Activated B cell treated with CpG ODN at 0.5 μM for 24 hours (primary cell): ENCODE measurements at regions of chr22 and their contacts with region 1.

Region 1: GRCh38 chr22:21001560-21002325 is at the start of gene THAP7:
- DNase-seq: peak; percentile 97
- ATAC-seq: peak; percentile 88
- H3K4me3 Mint-ChIP-seq: peak within 1 kb of the TSS; percentile 93
- H3K27ac Mint-ChIP-seq: peak within 1 kb of the TSS; percentile 98
- H3K4me1 Mint-ChIP-seq: peaks cover 26% of the 10 kb centered on the region
- H3K27me3 Mint-ChIP-seq: no peaks in the 10 kb centered on the region
- CTCF ChIP-seq: no peak
- total RNA-seq, gene THAP7: 27.1 and 32.3 TPM in 2 replicates

Region 2: DNA sequence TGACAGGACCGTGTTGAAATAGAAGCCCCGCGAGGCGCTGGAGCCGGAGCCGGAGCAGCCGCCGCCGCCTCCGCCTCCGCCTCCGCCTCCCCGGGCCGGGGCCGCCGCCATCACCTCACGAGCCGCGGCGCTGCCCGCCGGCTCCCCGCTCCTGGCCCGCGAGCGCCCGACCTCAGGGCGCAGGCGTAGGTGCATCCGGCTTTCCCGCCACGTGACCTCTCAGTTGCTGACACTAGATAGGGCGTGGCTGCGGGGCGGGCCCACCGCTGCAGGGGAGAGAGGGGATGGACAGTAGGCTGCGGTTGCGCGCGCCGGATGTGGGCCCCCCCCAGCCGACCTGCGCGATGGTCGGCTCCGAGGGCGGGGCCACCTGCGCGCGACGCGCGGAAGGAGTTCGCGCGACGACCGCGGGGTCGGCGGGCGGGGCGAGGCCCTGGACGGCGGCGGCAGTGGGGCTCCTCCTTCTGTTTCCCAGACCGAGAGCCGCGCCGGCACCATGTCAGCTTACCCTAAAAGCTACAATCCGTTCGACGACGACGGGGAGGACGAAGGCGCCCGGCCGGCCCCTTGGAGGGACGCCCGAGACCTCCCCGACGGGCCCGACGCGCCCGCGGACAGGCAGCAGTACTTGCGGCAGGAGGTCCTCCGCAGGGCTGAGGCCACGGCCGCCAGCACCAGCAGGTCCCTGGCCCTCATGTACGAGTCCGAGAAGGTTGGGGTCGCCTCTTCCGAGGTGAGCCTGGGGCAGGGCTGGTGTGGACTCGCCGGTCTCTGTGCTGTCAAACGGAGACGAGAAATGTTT is 142.9 kb before region 1 on chr22 and contains the starts of genes PI4KA and SNAP29:
- CTCF ChIA-PET with region 1: no interaction called
- POLR2A ChIA-PET with region 1: no interaction called
- intact Hi-C with region 1: loop called (anchors 1 kb)
- DNase-seq: peak; percentile 97
- ATAC-seq: peak; percentile 93
- H3K4me3 Mint-ChIP-seq: peak within 1 kb of the TSS; percentile 89
- H3K27ac Mint-ChIP-seq: peak within 1 kb of the TSS; percentile 80
- H3K4me1 Mint-ChIP-seq: peaks cover 46% of the 10 kb centered on the region
- H3K27me3 Mint-ChIP-seq: no peaks in the 10 kb centered on the region
- CTCF ChIP-seq: no peak
- total RNA-seq, gene PI4KA: 101 and 114 TPM in 2 replicates
- total RNA-seq, gene SNAP29: 22.1 and 23.6 TPM in 2 replicates

Region 3: DNA sequence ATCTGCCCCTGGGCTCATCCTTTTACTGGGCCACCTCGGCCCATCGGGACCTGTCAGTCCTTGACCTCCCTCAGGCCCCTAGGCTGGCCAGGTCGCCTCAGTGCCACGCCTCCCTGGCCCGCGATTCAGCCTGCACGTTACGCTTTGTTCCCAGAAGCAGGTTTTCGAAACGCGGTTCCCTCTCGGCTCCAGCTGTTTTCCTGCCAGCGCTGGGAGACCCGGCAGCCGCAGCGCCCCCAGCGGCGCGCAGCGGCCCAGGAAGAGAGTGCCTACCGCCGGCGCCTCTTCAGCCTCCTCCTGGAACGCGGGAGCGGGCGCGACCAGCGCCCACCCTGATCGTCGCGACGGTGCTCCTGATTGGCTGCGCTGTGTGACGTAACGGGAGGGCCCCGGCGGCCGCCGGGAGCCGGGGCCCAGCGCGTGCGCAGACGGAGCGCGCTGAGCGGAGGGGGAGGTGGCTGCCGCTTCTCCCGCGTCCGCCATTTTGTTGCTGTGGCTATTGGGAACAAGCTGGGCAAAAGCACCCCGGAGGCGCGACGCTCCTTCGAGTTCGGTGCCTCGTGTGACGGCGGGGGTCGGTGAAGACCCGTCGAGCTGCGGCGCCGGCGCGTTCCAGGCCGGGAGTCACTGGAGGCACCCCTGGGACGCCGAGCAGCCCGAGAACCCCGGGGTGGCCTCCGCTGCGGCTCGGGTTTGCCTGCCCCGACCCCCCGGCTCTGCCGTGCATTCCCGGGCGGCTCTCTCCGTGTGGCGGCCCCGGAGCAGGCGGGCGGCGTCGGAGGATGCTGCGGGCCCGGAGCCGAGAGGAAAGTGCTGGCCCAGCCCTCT is 84.5 kb before region 1 on chr22 and contains the start of gene CRKL:
- CTCF ChIA-PET with region 1: no interaction called
- POLR2A ChIA-PET with region 1: interaction called, 6 read pairs
- intact Hi-C with region 1: loop called (anchors 1 kb)
- DNase-seq: peak; percentile 89
- ATAC-seq: peak; percentile 97
- H3K4me3 Mint-ChIP-seq: peak within 1 kb of the TSS; percentile 97
- H3K27ac Mint-ChIP-seq: peak within 1 kb of the TSS; percentile 94
- H3K4me1 Mint-ChIP-seq: peaks cover 45% of the 10 kb centered on the region
- H3K27me3 Mint-ChIP-seq: no peaks in the 10 kb centered on the region
- CTCF ChIP-seq: peak; percentile 66
- total RNA-seq, gene CRKL: 51.1 and 55.7 TPM in 2 replicates

Region 4: DNA sequence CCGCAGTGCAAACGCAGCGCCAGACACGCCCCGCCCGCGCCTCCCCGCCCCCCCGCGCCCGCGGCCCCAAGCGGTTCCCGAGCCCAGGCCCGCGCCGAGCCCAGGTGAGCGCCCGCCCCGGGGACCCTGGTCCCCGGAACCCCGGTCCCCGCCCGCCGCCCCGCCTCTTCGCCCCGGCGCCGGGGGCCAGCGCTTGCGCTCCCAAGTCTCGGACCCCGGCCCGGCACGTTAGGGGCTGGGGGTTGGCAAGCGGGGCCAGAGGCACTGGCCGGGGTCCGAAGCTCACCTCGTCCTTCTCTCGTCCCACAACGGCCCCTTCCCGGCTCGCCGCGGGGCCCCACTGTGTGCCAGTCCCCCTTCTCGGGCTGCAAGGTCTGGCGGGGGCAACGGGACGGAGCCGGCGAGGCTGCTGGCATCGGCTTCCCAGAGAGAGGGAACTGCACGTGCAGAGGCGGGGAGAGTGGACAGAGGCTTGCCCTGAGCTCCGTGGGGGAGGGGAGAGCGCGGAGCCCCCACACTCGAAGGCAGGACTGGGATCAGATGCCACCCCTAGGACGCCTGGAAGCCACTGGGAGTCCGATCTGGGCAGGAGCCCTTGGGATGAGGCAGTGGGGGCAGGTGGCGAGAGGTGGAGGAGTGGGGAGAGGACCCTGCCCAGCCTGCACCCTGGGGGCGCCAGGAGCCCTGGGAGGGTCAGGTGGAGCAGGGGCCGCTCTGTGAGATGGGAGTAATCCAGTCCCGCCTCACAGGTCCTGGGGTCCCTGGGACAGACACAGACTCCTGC is 36.4 kb before region 1 on chr22:
- CTCF ChIA-PET with region 1: interaction called, 3 read pairs
- POLR2A ChIA-PET with region 1: interaction called, 4 read pairs
- intact Hi-C with region 1: loop called (anchors 5 kb)
- DNase-seq: no peak
- ATAC-seq: peak; percentile 43
- H3K4me3 Mint-ChIP-seq: peak overlapping the region; percentile 61
- H3K27ac Mint-ChIP-seq: no peak overlapping the region
- H3K4me1 Mint-ChIP-seq: peaks cover 49% of the 10 kb centered on the region
- H3K27me3 Mint-ChIP-seq: peaks cover 5% of the 10 kb centered on the region
- CTCF ChIP-seq: no peak

Region 5: GRCh38 chr22:20981787-20982562 is 19.8 kb before region 1 on chr22 and contains the start of gene LZTR1:
- CTCF ChIA-PET with region 1: interaction called, 3 read pairs
- POLR2A ChIA-PET with region 1: interaction called, 90 read pairs
- intact Hi-C with region 1: loop called (anchors 1 kb)
- DNase-seq: peak; percentile 74
- ATAC-seq: peak; percentile 80
- H3K4me3 Mint-ChIP-seq: peak within 1 kb of the TSS; percentile 93
- H3K27ac Mint-ChIP-seq: peak within 1 kb of the TSS; percentile 88
- H3K4me1 Mint-ChIP-seq: peaks cover 31% of the 10 kb centered on the region
- H3K27me3 Mint-ChIP-seq: no peaks in the 10 kb centered on the region
- CTCF ChIP-seq: no peak
- total RNA-seq, gene LZTR1: 79.2 and 89.3 TPM in 2 replicates

Region 6: GRCh38 chr22:21014202-21014725 is 12.5 kb after region 1 on chr22:
- CTCF ChIA-PET with region 1: no interaction called
- POLR2A ChIA-PET with region 1: interaction called, 37 read pairs
- intact Hi-C with region 1: loop called (anchors 1 kb)
- DNase-seq: peak; percentile 85
- ATAC-seq: peak; percentile 95
- H3K4me3 Mint-ChIP-seq: peak overlapping the region; percentile 93
- H3K27ac Mint-ChIP-seq: peak overlapping the region; percentile 92
- H3K4me1 Mint-ChIP-seq: peaks cover 27% of the 10 kb centered on the region
- H3K27me3 Mint-ChIP-seq: no peaks in the 10 kb centered on the region
- CTCF ChIP-seq: no peak

Region 7: DNA sequence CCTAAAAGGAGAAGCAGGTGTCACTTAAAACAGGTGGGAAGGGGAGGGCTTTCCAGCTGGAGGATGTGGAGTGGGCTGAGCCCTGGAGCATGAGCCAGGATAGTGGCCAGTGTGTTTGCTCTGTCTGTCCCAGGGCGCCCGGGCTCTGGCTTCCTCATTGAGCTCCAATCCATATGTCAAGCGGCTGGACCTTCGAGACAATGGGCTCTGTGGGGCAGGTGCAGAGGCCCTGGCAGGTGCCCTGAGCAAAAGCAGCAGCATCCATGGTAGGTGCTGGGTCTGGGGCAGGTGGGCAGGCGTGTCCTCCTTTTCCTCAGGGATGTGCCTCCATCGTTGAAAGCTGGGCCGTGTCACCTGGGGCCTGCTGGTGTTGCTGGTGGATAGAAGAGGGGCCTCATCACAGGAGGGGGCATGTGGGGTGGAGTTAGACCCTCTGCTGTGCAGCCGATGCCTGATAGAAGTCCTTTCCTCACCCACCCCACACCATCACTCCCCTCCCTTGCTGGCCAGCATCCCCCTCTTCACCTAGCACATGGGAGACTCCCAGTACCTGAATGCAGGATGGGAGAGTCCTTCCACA is 46.1 kb after region 1 on chr22:
- CTCF ChIA-PET with region 1: no interaction called
- POLR2A ChIA-PET with region 1: interaction called, 8 read pairs
- intact Hi-C with region 1: loop called (anchors 1 kb)
- DNase-seq: no peak
- ATAC-seq: no peak
- H3K4me3 Mint-ChIP-seq: no peak overlapping the region
- H3K27ac Mint-ChIP-seq: no peak overlapping the region
- H3K4me1 Mint-ChIP-seq: peaks cover 24% of the 10 kb centered on the region
- H3K27me3 Mint-ChIP-seq: peaks cover 18% of the 10 kb centered on the region
- CTCF ChIP-seq: no peak